ENCODE measurements at regions of chr3 and their contacts with region 1.

Region 1: GRCh38 chr3:100590114-100590839 is 19.1 kb upstream of the ADGRG7 start:
- DNase-seq: peak; percentile 55
- H3K4me3 Mint-ChIP-seq: peak overlapping the region; percentile 39
- H3K27ac Mint-ChIP-seq: no peak overlapping the region
- H3K4me1 Mint-ChIP-seq: peaks cover 17% of the 10 kb centered on the region
- H3K27me3 Mint-ChIP-seq: no peaks in the 10 kb centered on the region
- CTCF ChIP-seq: peak; percentile 61

Region 2: DNA sequence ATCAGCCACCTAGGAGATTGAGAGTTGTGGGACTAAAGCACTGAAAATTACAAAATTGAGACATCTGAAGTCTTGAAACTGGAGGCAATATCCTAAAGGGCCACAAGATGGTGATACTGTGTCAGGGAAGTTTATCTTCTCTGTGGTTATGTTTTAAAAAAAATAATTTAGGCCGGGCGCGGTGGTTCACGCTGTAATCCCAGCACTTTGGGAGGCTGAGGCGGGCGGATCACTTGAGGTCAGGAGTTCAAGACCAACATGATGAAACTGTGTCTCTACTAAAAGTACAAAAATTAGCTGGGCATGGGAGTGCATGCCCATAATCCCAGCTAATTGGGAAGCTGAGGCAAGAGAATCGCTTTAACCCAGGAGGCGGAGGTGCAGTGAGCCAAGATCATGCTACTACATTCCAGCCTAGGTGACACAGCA is 273.6 kb before region 1 on chr3:
- CTCF ChIA-PET with region 1: no interaction called
- intact Hi-C with region 1: loop called (anchors 5 kb)
- DNase-seq: peak; percentile 34
- H3K4me3 Mint-ChIP-seq: no peak overlapping the region
- H3K27ac Mint-ChIP-seq: no peak overlapping the region
- H3K4me1 Mint-ChIP-seq: no peaks in the 10 kb centered on the region
- H3K27me3 Mint-ChIP-seq: no peaks in the 10 kb centered on the region
- CTCF ChIP-seq: peak; percentile 57

Region 3: DNA sequence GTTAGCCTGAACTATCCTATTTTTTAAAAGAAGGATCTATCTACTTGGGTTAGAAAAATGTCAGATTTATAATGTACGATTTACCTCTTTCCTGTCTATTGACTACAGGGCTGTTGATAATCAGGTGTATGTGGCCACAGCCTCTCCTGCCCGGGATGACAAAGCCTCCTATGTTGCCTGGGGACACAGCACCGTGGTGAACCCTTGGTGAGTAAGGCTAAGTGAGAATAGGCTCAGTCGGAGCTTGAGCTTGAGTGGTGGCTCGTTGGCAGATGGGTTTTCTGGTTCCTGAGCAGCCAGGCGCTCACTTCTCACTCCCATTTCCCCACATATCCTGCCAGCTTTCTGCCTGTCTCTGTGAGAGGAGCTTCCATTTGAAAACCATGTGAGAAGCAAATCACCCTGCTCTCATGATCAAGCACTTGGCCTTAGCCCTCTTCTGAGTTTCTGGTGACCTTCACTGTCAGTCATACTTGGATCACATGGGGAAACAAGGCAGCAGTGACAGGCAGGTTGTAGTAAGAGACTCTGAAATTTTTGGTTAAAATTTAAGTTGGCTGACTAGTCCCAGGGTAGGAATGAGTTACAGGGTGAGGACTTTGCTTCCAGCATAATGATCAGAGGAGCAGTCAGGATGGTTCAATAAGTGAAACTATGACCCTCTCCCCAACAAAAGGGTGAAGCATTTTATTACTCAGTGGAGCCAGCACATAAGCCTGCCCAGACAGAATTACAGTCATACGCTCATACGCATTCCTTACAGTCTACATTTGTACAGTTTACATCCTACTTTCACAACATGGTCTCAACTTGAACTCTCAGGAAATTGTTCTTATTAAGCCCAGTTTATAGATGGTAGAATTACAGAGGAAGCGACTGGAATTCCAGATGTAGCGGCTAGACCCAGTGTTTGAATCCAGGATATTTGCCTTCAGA is 237.7 kb before region 1 on chr3:
- CTCF ChIA-PET with region 1: no interaction called
- intact Hi-C with region 1: no loop called
- DNase-seq: no peak
- H3K4me3 Mint-ChIP-seq: no peak overlapping the region
- H3K27ac Mint-ChIP-seq: no peak overlapping the region
- H3K4me1 Mint-ChIP-seq: no peaks in the 10 kb centered on the region
- H3K27me3 Mint-ChIP-seq: no peaks in the 10 kb centered on the region
- CTCF ChIP-seq: no peak

Region 4: DNA sequence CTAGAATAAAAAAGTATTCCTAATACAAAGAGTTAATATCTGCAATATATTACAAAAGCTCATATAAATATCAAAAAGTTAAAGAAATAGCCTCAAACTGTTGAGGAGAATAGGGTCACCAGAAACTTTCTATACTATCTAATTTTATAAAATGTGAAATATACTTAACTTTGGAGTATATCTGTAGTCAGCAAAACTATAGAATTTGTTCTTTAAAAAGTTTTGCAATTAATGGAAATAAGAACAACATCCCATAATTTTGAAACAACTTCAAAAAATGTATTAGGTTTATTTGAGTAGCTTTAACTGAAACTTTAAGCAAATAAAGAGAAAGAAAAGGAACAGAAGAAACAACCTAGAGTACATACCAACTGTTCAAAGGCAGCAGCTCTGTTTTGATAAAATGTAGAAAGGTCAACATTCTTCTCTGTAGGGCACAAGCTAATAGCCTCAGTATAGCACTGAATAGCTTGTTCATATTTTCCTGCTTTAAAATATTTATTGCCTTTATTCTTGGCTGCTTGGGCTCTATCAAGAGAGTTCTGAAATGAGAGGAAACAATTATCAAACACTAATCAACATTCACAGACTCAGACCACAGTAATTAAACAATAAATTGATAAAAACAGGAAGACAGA is 203.7 kb before region 1 on chr3:
- CTCF ChIA-PET with region 1: no interaction called
- intact Hi-C with region 1: loop called (anchors 5 kb)
- DNase-seq: no peak
- H3K4me3 Mint-ChIP-seq: no peak overlapping the region
- H3K27ac Mint-ChIP-seq: no peak overlapping the region
- H3K4me1 Mint-ChIP-seq: no peaks in the 10 kb centered on the region
- H3K27me3 Mint-ChIP-seq: no peaks in the 10 kb centered on the region
- CTCF ChIP-seq: no peak

Region 5: GRCh38 chr3:100400780-100401673 is 189.2 kb before region 1 on chr3 and contains the starts of genes LNP1 and TOMM70:
- CTCF ChIA-PET with region 1: no interaction called
- intact Hi-C with region 1: loop called (anchors 5 kb)
- DNase-seq: peak; percentile 96
- H3K4me3 Mint-ChIP-seq: peak within 1 kb of the TSS; percentile 85
- H3K27ac Mint-ChIP-seq: peak within 1 kb of the TSS; percentile 98
- H3K4me1 Mint-ChIP-seq: peaks cover under 1% of the 10 kb centered on the region
- H3K27me3 Mint-ChIP-seq: no peaks in the 10 kb centered on the region
- CTCF ChIP-seq: no peak
- total RNA-seq, gene LNP1: 1.2 and 1.8 TPM in 2 replicates
- total RNA-seq, gene TOMM70: 49.5 and 49.9 TPM in 2 replicates

Region 6: DNA sequence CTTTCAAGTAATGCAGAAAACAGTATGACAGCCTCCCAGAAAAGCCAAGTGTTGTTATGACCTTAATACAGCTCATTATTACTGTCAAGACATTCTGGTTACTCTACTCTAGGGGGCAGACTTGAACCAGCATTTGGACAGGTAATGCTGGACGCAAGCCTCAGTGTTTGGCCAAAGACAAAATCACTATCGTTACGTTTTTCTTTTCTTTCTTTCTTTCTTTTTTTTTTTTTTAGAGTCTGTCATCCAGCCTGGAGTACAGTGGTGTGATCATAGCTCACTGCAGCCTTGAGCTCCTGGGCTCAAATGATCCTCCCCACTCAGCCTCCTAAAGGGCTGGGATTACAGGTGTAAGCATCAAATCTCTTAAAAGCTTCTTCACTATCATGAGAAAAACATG is 127.3 kb before region 1 on chr3:
- CTCF ChIA-PET with region 1: interaction called, 88 read pairs
- intact Hi-C with region 1: loop called (anchors 1 kb)
- DNase-seq: peak; percentile 50
- H3K4me3 Mint-ChIP-seq: no peak overlapping the region
- H3K27ac Mint-ChIP-seq: no peak overlapping the region
- H3K4me1 Mint-ChIP-seq: peaks cover 10% of the 10 kb centered on the region
- H3K27me3 Mint-ChIP-seq: no peaks in the 10 kb centered on the region
- CTCF ChIP-seq: peak; percentile 46

Region 7: GRCh38 chr3:100536088-100536487 is 54.2 kb before region 1 on chr3:
- CTCF ChIA-PET with region 1: no interaction called
- intact Hi-C with region 1: loop called (anchors 1 kb)
- DNase-seq: peak; percentile 28
- H3K4me3 Mint-ChIP-seq: no peak overlapping the region
- H3K27ac Mint-ChIP-seq: no peak overlapping the region
- H3K4me1 Mint-ChIP-seq: peaks cover 34% of the 10 kb centered on the region
- H3K27me3 Mint-ChIP-seq: no peaks in the 10 kb centered on the region
- CTCF ChIP-seq: no peak

Region 8: GRCh38 chr3:100561459-100562158 is 28.7 kb before region 1 on chr3:
- CTCF ChIA-PET with region 1: no interaction called
- intact Hi-C with region 1: no loop called
- DNase-seq: no peak
- H3K4me3 Mint-ChIP-seq: no peak overlapping the region
- H3K27ac Mint-ChIP-seq: no peak overlapping the region
- H3K4me1 Mint-ChIP-seq: no peaks in the 10 kb centered on the region
- H3K27me3 Mint-ChIP-seq: no peaks in the 10 kb centered on the region
- CTCF ChIP-seq: no peak

Region 9: DNA sequence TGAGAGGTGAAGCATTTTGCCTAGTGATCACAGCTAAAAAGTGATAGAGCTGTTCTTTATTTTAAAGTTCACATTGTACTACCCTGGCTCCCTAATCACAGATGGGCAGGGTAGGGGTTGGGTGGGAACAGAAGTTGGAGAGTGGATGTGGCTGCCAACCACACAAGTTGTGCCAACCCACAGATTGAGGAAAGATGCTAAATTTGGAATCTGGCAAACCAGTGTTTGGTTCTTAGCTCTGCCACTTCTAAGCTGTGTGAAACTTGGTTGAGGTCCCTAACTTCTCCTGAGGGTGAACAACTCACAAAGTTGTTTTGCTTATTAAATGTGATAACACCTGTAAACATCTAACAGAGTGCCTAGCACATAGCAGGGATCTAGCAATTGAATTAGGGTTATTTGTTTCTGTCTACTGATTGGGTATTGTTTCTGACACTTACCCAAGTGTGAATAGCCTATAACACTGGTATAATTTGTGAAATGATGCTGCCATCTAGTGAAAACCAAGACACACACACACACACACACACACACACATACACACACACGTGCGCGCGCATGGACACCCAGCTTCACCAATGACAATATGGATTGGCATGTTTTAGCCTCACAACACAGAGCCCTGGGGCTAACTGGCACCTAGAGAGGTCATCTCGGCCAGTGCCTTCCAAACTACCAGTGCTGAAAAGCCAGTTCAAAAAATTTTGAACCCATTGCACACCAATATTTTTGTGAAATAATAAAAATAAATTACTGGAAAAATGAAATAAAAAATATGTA is 44.4 kb after region 1 on chr3:
- CTCF ChIA-PET with region 1: interaction called, 8 read pairs
- intact Hi-C with region 1: loop called (anchors 2 kb)
- DNase-seq: peak; percentile 83
- H3K4me3 Mint-ChIP-seq: peak overlapping the region; percentile 48
- H3K27ac Mint-ChIP-seq: peak overlapping the region; percentile 88
- H3K4me1 Mint-ChIP-seq: peaks cover 39% of the 10 kb centered on the region
- H3K27me3 Mint-ChIP-seq: no peaks in the 10 kb centered on the region
- CTCF ChIP-seq: no peak

Measured in Calu3 (cell line).